ENCODE measurements at regions of chr9 and their contacts with region 1.

Region 1: GRCh38 chr9:96217754-96218693 is 84.0 kb downstream of the HSD17B3 start:
- DNase-seq: peak; percentile 71
- H3K4me3 ChIP-seq: peak overlapping the region in 2 of 3 experiments; percentile 29 to 41
- H3K27ac ChIP-seq: no peak overlapping the region
- H3K4me1 ChIP-seq: peaks cover 7% of the 10 kb centered on the region
- H3K27me3 ChIP-seq: peaks cover 13 to 18% of the 10 kb centered on the region in 2 experiments
- CTCF ChIP-seq: peak; percentile 90 to 99
- POLR2A ChIP-seq: no peak

Region 2: GRCh38 chr9:95181226-95181818 is 1036.7 kb before region 1 on chr9:
- CTCF ChIA-PET with region 1: interaction called, 3 read pairs
- POLR2A ChIA-PET with region 1: no interaction called
- dilution Hi-C with region 1: no loop called
- intact Hi-C with region 1: loop called (anchors 10 kb)
- DNase-seq: peak; percentile 38
- H3K4me3 ChIP-seq: no peak overlapping the region
- H3K27ac ChIP-seq: no peak overlapping the region
- H3K4me1 ChIP-seq: no peaks in the 10 kb centered on the region
- H3K27me3 ChIP-seq: no peaks in the 10 kb centered on the region
- CTCF ChIP-seq: peak; percentile 4 to 15
- POLR2A ChIP-seq: no peak

Region 3: DNA sequence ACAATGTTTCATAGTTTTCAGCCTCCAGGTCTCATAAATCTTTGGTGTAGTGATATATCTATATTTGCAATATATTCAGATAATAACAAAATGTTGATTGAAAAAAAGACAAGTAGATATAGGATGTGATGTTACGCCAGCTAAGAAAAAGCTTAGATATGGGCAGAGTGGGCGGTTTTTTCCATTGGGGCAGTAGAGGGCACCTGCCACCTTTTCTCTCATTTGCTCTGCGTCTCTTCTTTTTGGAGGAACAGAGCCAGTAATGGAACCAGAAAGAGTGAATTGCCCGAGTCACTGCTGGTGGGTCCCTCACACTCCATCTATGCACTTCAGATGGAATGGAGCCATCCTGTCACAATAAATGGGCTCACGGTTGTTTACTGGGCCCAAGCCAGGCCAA is 838.4 kb before region 1 on chr9:
- CTCF ChIA-PET with region 1: interaction called, 5 read pairs
- POLR2A ChIA-PET with region 1: no interaction called
- dilution Hi-C with region 1: no loop called
- intact Hi-C with region 1: loop called (anchors 2 kb)
- DNase-seq: no peak
- H3K4me3 ChIP-seq: no peak overlapping the region
- H3K27ac ChIP-seq: no peak overlapping the region
- H3K4me1 ChIP-seq: no peaks in the 10 kb centered on the region
- H3K27me3 ChIP-seq: peaks cover 0 to 2% of the 10 kb centered on the region in 2 experiments
- CTCF ChIP-seq: no peak
- POLR2A ChIP-seq: no peak

Region 4: DNA sequence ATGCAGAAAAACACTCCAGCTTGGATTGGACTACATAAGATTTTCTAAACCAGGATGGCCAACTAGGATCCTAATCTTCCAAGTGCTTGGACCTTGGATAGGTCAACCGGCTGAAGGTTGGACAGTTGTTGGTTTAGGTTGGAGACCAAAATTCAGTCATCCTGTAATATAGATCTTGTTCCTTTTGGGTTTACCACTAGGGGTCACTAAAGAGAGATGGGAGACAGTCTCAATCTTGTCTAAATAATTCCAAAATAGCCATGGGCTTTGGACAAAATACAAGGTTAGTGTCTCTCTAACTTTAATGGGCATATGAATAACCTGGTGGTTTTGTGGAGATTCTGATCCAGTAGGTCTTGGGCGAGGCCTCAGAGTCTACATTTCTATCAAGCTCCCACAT is 491.3 kb before region 1 on chr9:
- CTCF ChIA-PET with region 1: interaction called, 15 read pairs
- POLR2A ChIA-PET with region 1: interaction called, 3 read pairs
- dilution Hi-C with region 1: no loop called
- intact Hi-C with region 1: loop called (anchors 1 kb)
- DNase-seq: peak; percentile 57
- H3K4me3 ChIP-seq: no peak overlapping the region
- H3K27ac ChIP-seq: no peak overlapping the region
- H3K4me1 ChIP-seq: no peaks in the 10 kb centered on the region
- H3K27me3 ChIP-seq: no peaks in the 10 kb centered on the region
- CTCF ChIP-seq: peak; percentile 56 to 67
- POLR2A ChIP-seq: no peak

Region 5: DNA sequence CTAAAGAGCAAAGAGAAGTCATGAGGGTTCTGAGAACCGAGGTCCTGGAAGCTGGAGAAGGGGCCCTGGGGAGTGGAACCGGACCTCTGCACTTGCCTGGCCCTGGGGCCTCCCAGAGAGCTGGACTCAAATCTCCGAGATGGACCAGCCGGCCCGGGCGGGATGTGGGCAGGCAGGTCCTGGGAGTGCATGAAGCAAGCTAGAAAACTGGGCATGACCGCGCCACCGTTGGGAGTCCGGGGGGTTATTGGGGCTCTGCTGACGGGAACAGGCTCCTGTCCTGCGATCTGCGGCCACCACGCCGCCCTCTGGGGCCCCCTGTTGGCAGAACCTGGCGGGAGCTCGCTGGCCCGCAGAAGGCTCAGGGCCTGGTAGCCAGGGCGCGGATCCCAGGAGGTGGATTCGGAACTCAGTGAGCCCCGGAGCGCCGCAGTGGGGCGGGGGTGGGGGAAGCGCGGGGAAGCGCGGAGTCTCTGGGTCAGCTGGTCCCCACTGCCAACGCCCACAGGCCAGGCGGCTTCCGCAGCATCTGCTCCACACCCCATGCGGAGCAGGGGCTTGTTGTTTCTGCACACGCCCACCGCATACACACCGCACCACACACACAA is 191.9 kb before region 1 on chr9:
- CTCF ChIA-PET with region 1: no interaction called
- POLR2A ChIA-PET with region 1: no interaction called
- dilution Hi-C with region 1: no loop called
- intact Hi-C with region 1: loop called (anchors 5 kb)
- DNase-seq: no peak
- H3K4me3 ChIP-seq: no peak overlapping the region
- H3K27ac ChIP-seq: no peak overlapping the region
- H3K4me1 ChIP-seq: peaks cover 4% of the 10 kb centered on the region
- H3K27me3 ChIP-seq: peaks cover 34 to 40% of the 10 kb centered on the region in 2 experiments
- CTCF ChIP-seq: peak; percentile 11 to 30
- POLR2A ChIP-seq: no peak

Region 6: GRCh38 chr9:96232539-96233241 is 14.7 kb after region 1 on chr9:
- CTCF ChIA-PET with region 1: interaction called, 14 read pairs
- POLR2A ChIA-PET with region 1: no interaction called
- dilution Hi-C with region 1: no loop called
- intact Hi-C with region 1: no loop called
- DNase-seq: peak; percentile 24
- H3K4me3 ChIP-seq: no peak overlapping the region
- H3K27ac ChIP-seq: no peak overlapping the region
- H3K4me1 ChIP-seq: no peaks in the 10 kb centered on the region
- H3K27me3 ChIP-seq: peaks cover 7% of the 10 kb centered on the region in 2 experiments
- CTCF ChIP-seq: peak; percentile 84 to 87
- POLR2A ChIP-seq: no peak